CD8-positive, alpha-beta T cell (primary cell): ENCODE measurements at regions of chr13 and their contacts with region 1.

Region 1: DNA sequence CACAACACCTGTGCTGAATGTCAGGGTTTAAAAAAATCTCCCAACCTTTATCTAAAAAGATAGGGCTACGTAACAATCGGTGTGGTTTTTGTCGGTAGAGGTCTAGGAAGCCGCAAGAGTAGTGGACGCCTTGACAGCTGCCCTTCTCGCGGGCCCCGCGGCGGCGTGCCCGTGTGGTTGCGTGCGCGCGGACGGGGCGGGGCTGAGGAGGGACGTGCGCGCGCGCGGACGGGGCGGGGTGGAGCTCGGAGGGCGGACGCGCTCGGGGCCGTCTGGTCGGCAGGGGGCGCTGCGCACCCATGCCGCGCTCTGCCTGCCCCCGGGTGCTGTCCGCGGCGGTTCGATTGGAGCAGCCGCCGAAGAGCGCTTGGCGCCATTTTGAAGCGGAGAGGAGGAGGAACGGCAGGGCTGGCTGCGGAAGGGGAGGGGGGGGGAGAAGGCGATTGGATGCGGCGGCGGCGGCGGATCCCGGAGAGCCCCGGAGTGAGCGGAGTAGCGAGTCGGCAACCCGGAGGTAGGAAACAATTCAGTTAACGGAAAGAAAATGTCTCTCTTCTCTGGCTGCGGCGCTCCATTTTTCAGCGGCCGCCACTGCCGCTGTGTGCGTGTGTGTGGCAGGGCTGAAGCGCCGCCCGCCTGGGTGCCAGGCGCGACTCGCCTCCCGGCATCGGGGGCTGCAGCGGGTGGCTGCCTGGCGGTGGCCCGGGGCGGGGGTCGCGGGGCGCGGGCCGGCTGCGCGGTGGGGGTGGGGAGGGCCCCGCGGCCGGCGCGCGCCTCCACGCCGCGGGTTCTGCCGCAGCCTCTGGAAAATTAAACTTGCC is at the start of gene PDS5B:
- DNase-seq: peak; percentile 88 to 98 (median 95)
- ATAC-seq: peak; percentile 89
- H3K4me3 ChIP-seq: peak within 1 kb of the TSS; percentile 75 to 79
- H3K4me3 Mint-ChIP-seq: peak within 1 kb of the TSS; percentile 93
- H3K27ac ChIP-seq: peak within 1 kb of the TSS; percentile 62 to 79
- H3K27ac Mint-ChIP-seq: peak within 1 kb of the TSS; percentile 88
- H3K4me1 ChIP-seq: peaks cover 25% of the 10 kb centered on the region
- H3K4me1 Mint-ChIP-seq: peaks cover 36% of the 10 kb centered on the region
- H3K27me3 ChIP-seq: no peaks in the 10 kb centered on the region
- H3K27me3 Mint-ChIP-seq: no peaks in the 10 kb centered on the region
- CTCF ChIP-seq: peak; percentile 84
- total RNA-seq, gene PDS5B: 44.9 to 45.6 TPM

Region 2: DNA sequence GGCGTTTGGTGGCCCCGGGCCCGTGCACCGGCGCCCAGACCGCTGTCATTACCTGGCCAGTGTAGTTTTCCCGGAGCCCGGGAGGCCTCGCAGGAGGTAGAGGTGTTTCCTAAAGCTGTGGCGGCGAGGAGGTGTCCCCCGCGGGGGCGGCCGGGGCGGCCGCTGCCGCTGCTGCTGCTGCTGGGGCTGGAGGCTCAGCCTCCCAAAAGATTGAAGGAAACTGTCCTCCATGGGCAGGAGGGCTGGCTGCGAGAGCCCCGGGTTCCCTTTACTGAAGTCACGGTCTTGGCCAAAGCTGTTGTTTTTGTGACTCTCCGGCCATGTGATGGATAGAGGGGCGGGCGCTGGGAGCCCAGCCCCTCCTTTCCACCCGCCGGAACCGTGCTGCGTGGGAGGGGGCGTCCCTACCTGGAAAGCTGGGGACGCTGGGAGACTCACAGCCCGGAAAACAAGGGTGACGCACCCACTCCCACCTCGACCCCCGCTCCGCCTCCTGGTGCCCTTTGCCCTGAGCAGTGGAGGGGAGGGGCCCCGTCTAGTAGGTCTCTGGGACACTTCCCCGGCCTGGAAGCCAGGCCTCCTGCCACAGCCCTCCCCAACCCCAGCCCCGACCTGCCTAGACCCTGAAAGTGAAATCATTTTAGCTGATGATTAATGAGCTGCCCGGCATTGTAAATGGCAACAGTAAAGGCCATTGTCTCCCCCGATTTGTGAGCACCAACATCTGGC is 158.3 kb before region 1 on chr13 and contains the start of gene N4BP2L1:
- CTCF ChIA-PET with region 1: no interaction called
- POLR2A ChIA-PET with region 1: interaction called, 5 read pairs
- intact Hi-C with region 1: loop called (anchors 1 to 2 kb)
- DNase-seq: peak; percentile 64 to 94 (median 80)
- ATAC-seq: peak; percentile 72
- H3K4me3 ChIP-seq: peak within 1 kb of the TSS; percentile 60 to 72
- H3K4me3 Mint-ChIP-seq: peak within 1 kb of the TSS; percentile 87
- H3K27ac ChIP-seq: peak within 1 kb of the TSS; percentile 85 to 98
- H3K27ac Mint-ChIP-seq: peak within 1 kb of the TSS; percentile 94
- H3K4me1 ChIP-seq: peaks cover 29% of the 10 kb centered on the region
- H3K4me1 Mint-ChIP-seq: peaks cover 39% of the 10 kb centered on the region
- H3K27me3 ChIP-seq: no peaks in the 10 kb centered on the region
- H3K27me3 Mint-ChIP-seq: no peaks in the 10 kb centered on the region
- CTCF ChIP-seq: no peak
- total RNA-seq, gene N4BP2L1: 53.2 to 54.1 TPM

Region 3: DNA sequence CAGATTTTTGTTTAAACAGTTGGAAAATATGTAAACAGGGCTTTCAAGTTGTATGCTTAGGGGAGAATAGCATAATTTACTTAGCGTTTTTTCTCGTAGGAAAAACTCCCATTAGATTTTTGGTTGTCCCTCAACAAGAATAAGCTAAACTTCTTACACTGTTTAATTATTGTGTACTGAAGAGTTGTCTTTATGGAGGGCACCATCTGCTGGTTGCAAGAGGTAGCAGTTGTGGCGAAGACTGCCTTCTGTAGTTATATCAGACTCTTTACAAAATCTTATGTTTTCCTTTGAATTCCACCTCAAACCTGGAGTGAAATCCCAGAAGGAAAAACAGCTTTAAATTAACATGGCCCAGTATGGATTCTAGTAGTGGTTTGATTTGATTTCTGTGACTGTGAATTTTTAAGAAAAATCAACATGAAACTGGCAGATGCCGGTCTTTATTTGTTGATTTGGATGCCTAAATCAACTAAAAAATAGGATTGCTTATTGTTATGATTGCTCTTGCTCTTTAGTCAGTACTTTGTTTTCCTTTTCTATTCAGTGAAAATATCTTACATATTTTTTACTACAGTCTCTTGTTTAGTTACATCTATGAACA is 53.3 kb after region 1 on chr13:
- CTCF ChIA-PET with region 1: interaction called, 31 read pairs
- POLR2A ChIA-PET with region 1: interaction called, 4 read pairs
- intact Hi-C with region 1: loop called (anchors 1 kb)
- DNase-seq: peak; percentile 10 to 81 (median 56)
- ATAC-seq: peak; percentile 92
- H3K4me3 ChIP-seq: no peak overlapping the region
- H3K4me3 Mint-ChIP-seq: no peak overlapping the region
- H3K27ac ChIP-seq: no peak overlapping the region
- H3K27ac Mint-ChIP-seq: no peak overlapping the region
- H3K4me1 ChIP-seq: no peaks in the 10 kb centered on the region
- H3K4me1 Mint-ChIP-seq: peaks cover 32% of the 10 kb centered on the region
- H3K27me3 ChIP-seq: no peaks in the 10 kb centered on the region
- H3K27me3 Mint-ChIP-seq: no peaks in the 10 kb centered on the region
- CTCF ChIP-seq: peak; percentile 73

Region 4: DNA sequence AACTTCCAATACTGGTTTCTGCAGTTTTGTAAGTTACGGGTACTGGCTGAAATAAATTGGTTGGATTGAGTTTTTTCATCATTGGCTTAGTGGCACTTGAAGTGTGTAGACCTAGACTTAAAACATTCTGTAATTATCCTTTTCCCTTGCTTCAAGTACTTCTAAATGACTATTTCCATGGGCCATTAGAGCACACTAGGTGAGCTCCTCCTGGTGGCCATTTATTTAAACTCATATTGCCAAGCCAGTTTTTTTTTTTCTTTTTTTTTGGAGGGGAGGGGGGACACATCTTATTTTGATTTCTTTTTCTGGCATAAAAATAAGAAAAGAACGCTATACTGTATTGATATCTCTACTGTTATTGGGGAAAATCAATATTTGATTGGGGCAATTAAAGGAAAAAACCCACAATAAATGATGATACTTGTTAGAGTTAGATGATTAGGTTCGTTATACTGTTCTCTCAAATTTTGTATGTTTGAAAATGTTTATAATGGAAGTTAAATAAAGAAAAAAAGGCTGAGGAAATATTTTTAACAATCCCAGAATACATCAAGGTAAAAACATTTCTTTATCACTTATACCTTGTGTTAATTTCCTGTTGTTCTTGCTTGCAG is 82.8 kb after region 1 on chr13:
- CTCF ChIA-PET with region 1: interaction called, 8 read pairs
- POLR2A ChIA-PET with region 1: no interaction called
- intact Hi-C with region 1: loop called (anchors 1 kb)
- DNase-seq: peak in 3 of 9 experiments; percentile 7 to 70 (median 59)
- ATAC-seq: peak; percentile 76
- H3K4me3 ChIP-seq: no peak overlapping the region
- H3K4me3 Mint-ChIP-seq: no peak overlapping the region
- H3K27ac ChIP-seq: no peak overlapping the region
- H3K27ac Mint-ChIP-seq: no peak overlapping the region
- H3K4me1 ChIP-seq: no peaks in the 10 kb centered on the region
- H3K4me1 Mint-ChIP-seq: peaks cover 14% of the 10 kb centered on the region
- H3K27me3 ChIP-seq: no peaks in the 10 kb centered on the region
- H3K27me3 Mint-ChIP-seq: no peaks in the 10 kb centered on the region
- CTCF ChIP-seq: peak; percentile 60

Region 5: GRCh38 chr13:32911506-32911905 is 325.2 kb after region 1 on chr13:
- CTCF ChIA-PET with region 1: interaction called, 3 read pairs
- POLR2A ChIA-PET with region 1: no interaction called
- intact Hi-C with region 1: loop called in 1 of 2 experiments (anchors 5 kb)
- DNase-seq: peak in 2 of 9 experiments; percentile 23 to 50
- ATAC-seq: no peak
- H3K4me3 ChIP-seq: no peak overlapping the region
- H3K4me3 Mint-ChIP-seq: no peak overlapping the region
- H3K27ac ChIP-seq: no peak overlapping the region
- H3K27ac Mint-ChIP-seq: no peak overlapping the region
- H3K4me1 ChIP-seq: no peaks in the 10 kb centered on the region
- H3K4me1 Mint-ChIP-seq: no peaks in the 10 kb centered on the region
- H3K27me3 ChIP-seq: peaks cover 0 to 2% of the 10 kb centered on the region in 2 experiments
- H3K27me3 Mint-ChIP-seq: peaks cover 4% of the 10 kb centered on the region
- CTCF ChIP-seq: no peak

Region 6: DNA sequence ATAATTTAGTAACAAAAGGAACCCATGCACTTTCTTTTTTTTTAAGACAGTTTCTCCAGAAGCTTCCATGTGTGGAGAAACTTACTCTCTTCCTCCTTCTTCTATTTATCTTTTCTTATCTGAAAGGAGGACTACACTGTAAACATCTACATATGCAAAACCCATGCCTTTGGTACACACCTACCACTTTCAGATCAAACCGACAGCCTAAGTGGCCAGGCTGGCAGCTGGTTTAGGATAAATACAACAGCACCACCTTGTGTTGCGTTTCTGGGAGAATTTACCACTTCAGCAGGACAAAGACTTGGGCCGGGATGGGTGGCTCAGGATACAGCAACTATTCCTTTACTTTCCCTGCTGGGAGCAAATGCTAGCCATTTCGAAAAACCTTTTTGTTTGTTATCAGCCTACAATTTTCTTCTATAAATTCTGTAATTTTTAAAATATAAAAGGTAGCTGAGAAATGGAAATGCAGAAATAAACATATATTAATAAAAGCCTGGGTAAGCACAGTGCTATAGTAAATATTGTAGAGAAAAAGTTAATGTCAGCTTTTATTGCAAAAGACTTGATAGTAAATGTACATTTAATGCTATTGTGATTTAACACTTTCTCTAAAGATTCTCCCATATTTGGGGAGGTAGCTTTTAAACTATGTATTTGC is 1137.6 kb after region 1 on chr13:
- CTCF ChIA-PET with region 1: no interaction called
- POLR2A ChIA-PET with region 1: no interaction called
- intact Hi-C with region 1: loop called (anchors 1 to 2 kb)
- DNase-seq: peak; percentile 21 to 82 (median 56)
- ATAC-seq: peak; percentile 84
- H3K4me3 ChIP-seq: no peak overlapping the region
- H3K4me3 Mint-ChIP-seq: no peak overlapping the region
- H3K27ac ChIP-seq: no peak overlapping the region
- H3K27ac Mint-ChIP-seq: no peak overlapping the region
- H3K4me1 ChIP-seq: peaks cover 6% of the 10 kb centered on the region
- H3K4me1 Mint-ChIP-seq: peaks cover 13% of the 10 kb centered on the region
- H3K27me3 ChIP-seq: no peaks in the 10 kb centered on the region
- H3K27me3 Mint-ChIP-seq: no peaks in the 10 kb centered on the region
- CTCF ChIP-seq: peak; percentile 65